ENCODE measurements at regions of chr15 and their contacts with region 1.

Region 1: GRCh38 chr15:75201609-75202250 is at the start of gene C15orf39:
- DNase-seq: peak; percentile 76
- H3K4me3 ChIP-seq: peak within 1 kb of the TSS; percentile 65 to 98 (median 82)
- H3K27ac ChIP-seq: peak within 1 kb of the TSS; percentile 79
- H3K4me1 ChIP-seq: peaks cover 27% of the 10 kb centered on the region
- H3K27me3 ChIP-seq: no peaks in the 10 kb centered on the region
- CTCF ChIP-seq: peak; percentile 66 to 92
- POLR2A ChIP-seq: peak; percentile 95
- total RNA-seq, gene C15orf39: 33.6 and 36.1 TPM in 2 replicates

Region 2: GRCh38 chr15:74674119-74674518 is 527.6 kb before region 1 on chr15:
- CTCF ChIA-PET with region 1: no interaction called
- POLR2A ChIA-PET with region 1: no interaction called
- dilution Hi-C with region 1: no loop called
- intact Hi-C with region 1: no loop called
- DNase-seq: no peak
- H3K4me3 ChIP-seq: no peak overlapping the region
- H3K27ac ChIP-seq: no peak overlapping the region
- H3K4me1 ChIP-seq: no peaks in the 10 kb centered on the region
- H3K27me3 ChIP-seq: no peaks in the 10 kb centered on the region
- CTCF ChIP-seq: no peak
- POLR2A ChIP-seq: no peak

Region 3: DNA sequence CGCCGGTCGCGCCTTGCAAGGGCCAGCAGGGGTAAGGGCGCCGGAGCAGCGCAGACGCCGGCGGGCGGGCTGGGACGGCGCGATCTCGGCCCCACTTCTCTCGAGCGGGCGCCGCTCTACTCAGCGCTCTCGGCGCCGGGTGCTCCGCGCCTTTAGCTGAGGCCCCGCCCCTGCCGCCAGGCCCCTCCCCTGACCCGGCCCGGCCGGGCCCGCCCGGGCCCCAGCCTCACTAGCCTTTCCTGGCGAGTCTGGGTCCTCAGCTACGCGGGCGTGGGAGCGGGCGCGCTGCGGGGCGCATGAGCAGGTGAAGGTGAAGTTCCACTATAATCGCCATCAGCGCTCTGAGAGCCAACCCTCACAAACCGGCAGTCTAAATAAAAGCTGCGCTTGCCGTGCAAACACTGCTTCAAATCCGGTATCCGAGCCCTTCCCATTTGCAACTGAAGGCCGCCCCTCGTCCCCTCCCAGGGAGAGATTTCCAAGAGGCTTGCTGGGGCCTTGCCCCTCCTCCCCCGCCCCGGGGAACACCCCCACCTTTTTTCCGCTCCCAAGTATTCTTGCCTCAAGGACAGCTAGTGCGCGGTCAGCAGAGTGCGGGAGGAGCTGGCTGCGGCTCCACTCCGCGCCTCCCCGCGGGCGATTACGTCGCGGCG is 245.0 kb before region 1 on chr15 and contains the start of gene RPP25:
- CTCF ChIA-PET with region 1: interaction called, 10 read pairs
- POLR2A ChIA-PET with region 1: no interaction called
- dilution Hi-C with region 1: no loop called
- intact Hi-C with region 1: loop called (anchors 1 kb)
- DNase-seq: peak; percentile 76
- H3K4me3 ChIP-seq: peak within 1 kb of the TSS; percentile 44 to 56 (median 53)
- H3K27ac ChIP-seq: peak within 1 kb of the TSS; percentile 46
- H3K4me1 ChIP-seq: peaks cover 58% of the 10 kb centered on the region
- H3K27me3 ChIP-seq: peaks cover 0 to 3% of the 10 kb centered on the region in 2 experiments
- CTCF ChIP-seq: no peak
- POLR2A ChIP-seq: peak; percentile 80
- total RNA-seq, gene RPP25: 13.7 and 13.8 TPM in 2 replicates

Region 4: GRCh38 chr15:75029378-75030022 is 172.2 kb before region 1 on chr15:
- CTCF ChIA-PET with region 1: interaction called, 213 read pairs
- POLR2A ChIA-PET with region 1: interaction called, 20 read pairs
- dilution Hi-C with region 1: no loop called
- intact Hi-C with region 1: loop called (anchors 1 kb)
- DNase-seq: peak; percentile 96
- H3K4me3 ChIP-seq: peak overlapping the region in 1 of 3 experiments; percentile 30
- H3K27ac ChIP-seq: peak overlapping the region; percentile 99
- H3K4me1 ChIP-seq: peaks cover 37% of the 10 kb centered on the region
- H3K27me3 ChIP-seq: no peaks in the 10 kb centered on the region
- CTCF ChIP-seq: peak; percentile 94
- POLR2A ChIP-seq: no peak

Region 5: DNA sequence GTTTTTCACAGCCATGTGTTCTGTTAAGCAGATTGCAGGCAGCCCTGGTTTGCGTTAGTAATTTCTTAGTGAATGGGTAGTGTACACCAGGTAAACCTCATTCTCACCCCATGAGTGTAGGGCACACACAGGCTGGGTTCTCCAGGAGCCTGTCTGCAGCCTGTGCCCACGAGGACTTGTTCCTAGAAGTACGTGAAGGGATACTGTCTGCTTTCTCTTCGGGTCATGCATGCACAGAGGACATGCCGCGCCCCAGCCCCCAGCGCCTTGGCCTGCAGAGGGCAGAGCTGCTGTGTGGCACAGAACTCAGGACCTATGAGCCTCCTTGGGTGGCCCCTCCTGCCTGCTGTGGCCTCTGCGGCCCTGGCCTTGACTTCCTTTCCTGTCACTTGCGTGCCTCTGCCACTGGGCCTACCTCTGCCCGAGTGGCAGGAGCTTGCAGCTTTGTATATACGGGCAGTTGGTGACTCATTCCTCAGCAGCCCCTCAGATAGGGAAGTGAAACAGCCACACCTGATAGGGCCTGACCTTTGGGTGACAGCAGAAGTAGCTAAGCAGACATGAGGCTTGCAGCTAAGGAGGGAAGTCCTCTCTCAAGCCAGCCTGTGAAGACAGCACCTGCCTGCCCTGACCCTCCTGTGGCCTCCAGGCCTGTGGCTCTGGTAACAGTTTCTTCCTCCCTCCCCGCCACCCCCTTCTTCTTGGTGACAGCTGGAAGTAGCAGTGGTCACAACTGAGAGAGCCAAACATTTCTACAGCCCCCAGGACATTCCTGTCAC is 158.8 kb before region 1 on chr15:
- CTCF ChIA-PET with region 1: interaction called, 122 read pairs
- POLR2A ChIA-PET with region 1: interaction called, 20 read pairs
- dilution Hi-C with region 1: no loop called
- intact Hi-C with region 1: loop called (anchors 1 kb)
- DNase-seq: peak; percentile 63
- H3K4me3 ChIP-seq: no peak overlapping the region
- H3K27ac ChIP-seq: peak overlapping the region; percentile 85
- H3K4me1 ChIP-seq: peaks cover 32% of the 10 kb centered on the region
- H3K27me3 ChIP-seq: no peaks in the 10 kb centered on the region
- CTCF ChIP-seq: peak; percentile 49 to 67
- POLR2A ChIP-seq: no peak

Region 6: GRCh38 chr15:75104804-75105535 is 96.8 kb before region 1 on chr15:
- CTCF ChIA-PET with region 1: interaction called, 9 read pairs
- POLR2A ChIA-PET with region 1: interaction called, 3 read pairs
- dilution Hi-C with region 1: no loop called
- intact Hi-C with region 1: loop called (anchors 1 kb)
- DNase-seq: peak; percentile 97
- H3K4me3 ChIP-seq: no peak overlapping the region
- H3K27ac ChIP-seq: peak overlapping the region; percentile 98
- H3K4me1 ChIP-seq: peaks cover 37% of the 10 kb centered on the region
- H3K27me3 ChIP-seq: no peaks in the 10 kb centered on the region
- CTCF ChIP-seq: no peak
- POLR2A ChIP-seq: peak; percentile 64

Region 7: DNA sequence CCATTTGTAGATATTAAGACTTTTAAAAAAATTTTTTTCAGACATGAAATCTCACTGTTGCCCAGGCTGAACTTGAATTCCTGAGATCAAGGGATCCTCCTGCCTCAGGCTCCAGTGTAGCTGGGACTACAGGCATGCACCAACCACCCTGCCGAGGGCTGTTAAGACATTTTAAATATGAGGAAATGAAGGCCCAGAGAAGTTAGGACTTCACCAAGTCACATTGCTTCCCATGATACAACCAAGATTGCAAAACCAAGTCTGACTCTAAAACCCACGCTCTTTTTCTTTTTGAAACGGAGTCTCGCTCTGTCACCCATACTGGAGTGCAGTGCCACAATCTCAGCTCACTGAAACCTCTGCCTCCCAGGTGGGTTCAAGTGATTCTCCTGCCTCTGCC is 349.4 kb after region 1 on chr15:
- CTCF ChIA-PET with region 1: no interaction called
- POLR2A ChIA-PET with region 1: no interaction called
- dilution Hi-C with region 1: no loop called
- intact Hi-C with region 1: no loop called
- DNase-seq: no peak
- H3K4me3 ChIP-seq: no peak overlapping the region
- H3K27ac ChIP-seq: no peak overlapping the region
- H3K4me1 ChIP-seq: no peaks in the 10 kb centered on the region
- H3K27me3 ChIP-seq: no peaks in the 10 kb centered on the region
- CTCF ChIP-seq: no peak
- POLR2A ChIP-seq: no peak

Measured in endothelial cell of umbilical vein (primary cell).